AG04450 (cell line): ENCODE measurements at regions of chr11 and their contacts with region 1.

Region 1: DNA sequence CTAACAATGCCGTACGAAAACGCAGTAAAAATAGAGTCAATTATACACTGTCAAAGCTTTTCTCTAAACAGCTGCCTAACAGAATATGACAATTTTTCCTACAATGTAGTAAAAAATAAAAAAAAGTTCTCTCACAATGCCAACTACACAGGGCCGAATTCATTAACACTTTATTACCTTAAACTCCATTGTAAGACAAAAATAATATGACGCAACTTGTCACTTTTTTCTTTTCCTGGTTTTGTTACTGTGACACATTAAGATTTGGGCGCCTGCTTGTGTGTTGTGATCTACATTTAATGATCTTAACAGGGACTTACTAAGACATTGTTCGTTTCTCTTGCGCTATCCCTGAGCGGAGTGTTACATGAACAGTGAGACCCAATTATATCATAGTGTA is 204.1 kb downstream of the INSC start:
- DNase-seq: no peak
- H3K4me3 ChIP-seq: no peak overlapping the region
- H3K27ac ChIP-seq: no peak overlapping the region
- H3K27me3 ChIP-seq: no peaks in the 10 kb centered on the region
- CTCF ChIP-seq: no peak

Region 2: DNA sequence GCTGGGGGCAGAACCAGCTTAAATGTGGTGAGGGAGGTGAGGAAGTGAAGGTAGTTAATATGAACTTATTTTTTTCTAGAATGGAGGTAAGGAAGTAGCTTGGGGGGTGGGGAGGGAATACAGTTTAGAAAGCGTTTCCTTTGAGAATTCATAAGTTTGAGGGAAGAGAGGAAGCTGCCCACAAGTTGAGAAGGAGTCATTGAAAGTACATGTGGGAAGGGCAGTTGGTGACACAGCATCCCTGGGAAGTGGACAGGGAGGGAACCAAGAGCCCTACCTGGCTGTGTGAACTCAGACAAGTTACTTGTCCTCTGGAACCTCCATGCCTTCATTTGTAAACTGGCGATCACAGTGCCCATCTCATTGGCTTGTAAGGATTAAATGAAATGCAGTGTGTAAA is 1482.1 kb before region 1 on chr11:
- CTCF ChIA-PET with region 1: interaction called, 11 read pairs
- POLR2A ChIA-PET with region 1: no interaction called
- DNase-seq: no peak
- H3K4me3 ChIP-seq: no peak overlapping the region
- H3K27ac ChIP-seq: no peak overlapping the region
- H3K27me3 ChIP-seq: no peaks in the 10 kb centered on the region
- CTCF ChIP-seq: no peak